Activated naive CD4-positive, alpha-beta T cell treated with anti-CD3 and anti-CD28 coated beads, Interleukin-2, amount 10 ng/mL, durations not matched to agents 7 days and 5 days (primary cell): ENCODE measurements at regions of chr1 and their contacts with region 1.

Region 1: DNA sequence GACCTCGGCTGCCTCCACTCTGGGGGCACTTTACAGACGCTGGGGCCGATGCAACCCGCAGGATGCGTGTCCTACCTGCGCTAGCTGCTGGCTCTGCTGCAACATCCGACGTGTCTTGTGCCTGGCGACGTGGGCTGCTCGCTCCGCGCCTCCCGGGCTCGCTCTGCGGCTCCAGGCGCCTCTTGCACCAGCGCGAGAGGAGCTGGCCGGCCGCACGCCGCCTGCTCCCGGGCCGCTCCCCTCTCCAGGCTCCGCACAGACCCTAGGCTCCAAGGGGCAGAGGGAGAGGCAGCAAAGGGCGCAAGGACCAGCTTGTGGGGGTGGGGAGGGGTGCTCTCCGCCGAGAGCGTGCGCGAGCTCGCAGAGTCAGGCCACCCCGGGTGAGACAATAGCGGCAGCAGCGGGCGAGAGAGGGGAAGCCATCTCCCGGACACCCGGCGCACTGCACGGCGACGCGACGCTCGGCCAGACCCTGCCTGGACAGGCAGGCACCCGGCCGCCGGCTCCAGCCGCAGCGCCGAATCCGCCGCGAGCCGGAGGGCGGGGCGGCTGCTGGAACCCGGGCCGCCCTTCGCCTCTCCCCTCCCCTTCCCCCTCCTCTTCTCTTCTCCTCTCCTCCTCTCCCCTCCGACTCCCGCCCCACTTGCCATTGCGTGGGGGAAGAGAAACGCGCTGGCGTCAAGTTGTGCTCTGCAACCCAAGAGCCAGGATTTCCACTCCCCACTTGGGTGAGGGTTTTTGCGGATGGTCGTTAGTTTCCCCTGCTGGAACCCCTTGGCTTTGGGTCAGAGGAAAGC is at the start of gene PIK3C2B:
- DNase-seq: peak; percentile 81
- H3K4me3 Mint-ChIP-seq: peak within 1 kb of the TSS; percentile 93
- H3K27ac Mint-ChIP-seq: peak within 1 kb of the TSS; percentile 95
- H3K4me1 Mint-ChIP-seq: peaks cover 66% of the 10 kb centered on the region
- H3K27me3 Mint-ChIP-seq: peaks cover 13% of the 10 kb centered on the region

Region 2: GRCh38 chr1:204335085-204335484 is 159.4 kb before region 1 on chr1:
- CTCF ChIA-PET with region 1: no interaction called
- DNase-seq: no peak
- H3K4me3 Mint-ChIP-seq: no peak overlapping the region
- H3K27ac Mint-ChIP-seq: no peak overlapping the region
- H3K4me1 Mint-ChIP-seq: no peaks in the 10 kb centered on the region
- H3K27me3 Mint-ChIP-seq: peaks cover 16% of the 10 kb centered on the region

Region 3: DNA sequence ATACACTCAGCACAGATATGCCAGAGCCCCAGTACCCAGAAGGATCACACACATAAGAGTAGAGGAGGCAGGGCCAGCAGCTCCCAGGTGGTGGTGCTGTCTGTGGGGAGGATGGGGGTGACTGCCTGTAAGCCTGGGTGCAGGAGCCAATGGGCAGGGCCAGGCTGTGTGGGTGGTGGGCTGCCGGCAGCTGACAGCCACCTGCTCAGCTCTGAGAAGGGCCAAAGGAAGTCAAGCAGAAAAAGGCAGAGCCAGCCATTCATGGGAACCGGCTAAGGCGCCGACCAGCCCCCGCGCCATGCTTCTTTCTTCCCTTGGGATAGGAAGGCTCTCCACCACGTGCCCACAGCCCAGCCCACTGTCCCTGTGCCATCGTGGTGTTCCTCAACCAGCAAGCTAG is 14.0 kb before region 1 on chr1:
- CTCF ChIA-PET with region 1: interaction called, 12 read pairs
- DNase-seq: no peak
- H3K4me3 Mint-ChIP-seq: no peak overlapping the region
- H3K27ac Mint-ChIP-seq: no peak overlapping the region
- H3K4me1 Mint-ChIP-seq: peaks cover 31% of the 10 kb centered on the region
- H3K27me3 Mint-ChIP-seq: no peaks in the 10 kb centered on the region

Region 4: DNA sequence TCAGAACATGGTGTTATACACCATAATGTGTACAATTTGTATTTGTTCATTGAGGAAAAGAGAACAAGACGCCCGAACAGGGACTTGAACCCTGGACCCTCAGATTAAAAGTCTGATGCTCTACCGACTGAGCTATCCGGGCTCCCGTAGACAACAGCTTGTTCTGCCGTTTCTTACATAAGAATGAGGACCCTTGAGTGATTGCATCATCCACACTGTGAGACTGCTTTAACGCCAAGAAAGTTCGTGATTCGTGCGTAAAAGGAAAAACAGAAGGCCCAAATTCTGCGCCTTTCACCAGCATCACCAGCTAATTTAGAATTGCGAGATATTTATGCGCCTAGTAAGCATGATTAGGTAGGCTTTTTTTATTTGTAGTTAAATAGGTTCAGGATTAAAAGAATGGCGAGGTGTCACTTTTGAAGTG is 12.5 kb after region 1 on chr1:
- CTCF ChIA-PET with region 1: interaction called, 21 read pairs
- DNase-seq: peak; percentile 88
- H3K4me3 Mint-ChIP-seq: peak overlapping the region; percentile 87
- H3K27ac Mint-ChIP-seq: peak overlapping the region; percentile 100
- H3K4me1 Mint-ChIP-seq: peaks cover 57% of the 10 kb centered on the region
- H3K27me3 Mint-ChIP-seq: peaks cover 5% of the 10 kb centered on the region